KBM-7 (cell line): ENCODE measurements at regions of chr5 and their contacts with region 1.

Region 1: GRCh38 chr5:119743927-119744326 is 114.6 kb downstream of the FAM170A start:
- DNase-seq: peak; percentile 70

Region 2: GRCh38 chr5:119452373-119453039 is 291.4 kb before region 1 on chr5 and contains the start of gene HSD17B4:
- in situ Hi-C with region 1: loop called (anchors 25 kb)
- DNase-seq: peak; percentile 90

Region 3: DNA sequence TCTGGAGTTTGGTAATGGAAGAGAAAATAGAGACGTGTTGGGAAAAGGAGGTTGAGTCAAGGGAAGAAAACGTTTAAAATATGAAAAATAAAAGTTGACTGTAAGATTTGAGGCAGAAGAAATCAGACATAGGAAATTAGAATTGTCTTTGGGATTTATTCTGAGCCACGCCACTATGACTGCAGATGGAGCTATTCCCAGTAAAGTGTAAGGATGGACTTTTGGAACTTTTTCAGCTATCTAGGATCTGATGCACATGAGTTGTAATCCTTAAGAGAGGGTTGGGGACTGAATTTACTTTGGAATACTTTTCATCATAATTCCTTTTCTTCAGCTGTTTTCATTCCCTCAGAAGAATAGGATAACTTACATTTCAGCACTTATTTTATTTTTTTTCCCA is 222.1 kb after region 1 on chr5:
- in situ Hi-C with region 1: no loop called
- DNase-seq: no peak

Region 4: GRCh38 chr5:120382833-120383232 is 638.9 kb after region 1 on chr5:
- in situ Hi-C with region 1: no loop called
- DNase-seq: no peak